Activated CD4-positive, alpha-beta T cell treated with anti-CD3 and anti-CD28 coated beads for 36 hours (primary cell): ENCODE measurements at regions of chr19 and their contacts with region 1.

Region 1: DNA sequence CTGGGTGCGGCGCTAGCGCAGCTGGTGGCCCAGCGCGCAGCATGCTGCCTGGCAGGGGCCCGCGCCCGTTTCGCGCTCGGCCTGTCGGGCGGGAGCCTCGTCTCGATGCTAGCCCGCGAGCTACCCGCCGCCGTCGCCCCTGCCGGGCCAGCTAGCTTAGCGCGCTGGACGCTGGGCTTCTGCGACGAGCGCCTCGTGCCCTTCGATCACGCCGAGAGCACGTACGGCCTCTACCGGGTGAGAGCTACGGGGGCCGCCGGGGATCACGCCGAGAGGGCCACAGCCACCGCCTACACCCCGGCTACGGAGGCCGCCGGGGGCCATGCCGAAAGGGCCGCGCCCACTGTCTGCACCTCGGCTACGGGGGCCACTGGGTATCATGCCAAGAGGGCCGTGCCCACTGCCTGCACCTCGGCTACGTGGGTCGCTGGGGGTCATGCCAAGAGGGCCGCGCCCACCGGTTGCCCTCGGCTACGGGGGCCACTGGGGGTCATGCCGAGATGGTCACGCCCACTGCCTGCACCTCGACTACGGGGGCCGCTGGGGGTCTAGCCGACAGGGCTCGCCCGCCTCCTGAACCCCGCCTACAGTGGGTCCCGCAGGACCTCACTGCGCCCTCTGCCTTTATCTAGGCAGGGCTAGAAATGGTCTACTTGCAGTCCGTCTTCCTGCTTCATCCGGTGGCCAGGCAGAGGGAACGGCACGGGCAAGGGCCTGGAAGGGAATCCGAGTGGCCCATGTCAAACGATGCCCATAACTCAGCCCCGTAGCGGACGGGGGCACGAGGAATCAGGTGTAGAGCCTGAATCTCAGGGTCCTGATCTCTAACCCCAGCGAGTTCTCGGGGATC is 500 bp downstream of the PGLS start:
- DNase-seq: peak; percentile 92
- ATAC-seq: peak; percentile 52
- H3K4me3 Mint-ChIP-seq: peak overlapping the region; percentile 95
- H3K27ac Mint-ChIP-seq: peak overlapping the region; percentile 88
- H3K4me1 Mint-ChIP-seq: peaks cover 39% of the 10 kb centered on the region
- H3K27me3 Mint-ChIP-seq: no peaks in the 10 kb centered on the region

Region 2: GRCh38 chr19:16435238-16435917 is 1076.6 kb before region 1 on chr19:
- CTCF ChIA-PET with region 1: no interaction called
- POLR2A ChIA-PET with region 1: no interaction called
- intact Hi-C with region 1: no loop called
- DNase-seq: no peak
- ATAC-seq: no peak
- H3K4me3 Mint-ChIP-seq: no peak overlapping the region
- H3K27ac Mint-ChIP-seq: peak overlapping the region; percentile 60
- H3K4me1 Mint-ChIP-seq: peaks cover 3% of the 10 kb centered on the region
- H3K27me3 Mint-ChIP-seq: no peaks in the 10 kb centered on the region

Region 3: DNA sequence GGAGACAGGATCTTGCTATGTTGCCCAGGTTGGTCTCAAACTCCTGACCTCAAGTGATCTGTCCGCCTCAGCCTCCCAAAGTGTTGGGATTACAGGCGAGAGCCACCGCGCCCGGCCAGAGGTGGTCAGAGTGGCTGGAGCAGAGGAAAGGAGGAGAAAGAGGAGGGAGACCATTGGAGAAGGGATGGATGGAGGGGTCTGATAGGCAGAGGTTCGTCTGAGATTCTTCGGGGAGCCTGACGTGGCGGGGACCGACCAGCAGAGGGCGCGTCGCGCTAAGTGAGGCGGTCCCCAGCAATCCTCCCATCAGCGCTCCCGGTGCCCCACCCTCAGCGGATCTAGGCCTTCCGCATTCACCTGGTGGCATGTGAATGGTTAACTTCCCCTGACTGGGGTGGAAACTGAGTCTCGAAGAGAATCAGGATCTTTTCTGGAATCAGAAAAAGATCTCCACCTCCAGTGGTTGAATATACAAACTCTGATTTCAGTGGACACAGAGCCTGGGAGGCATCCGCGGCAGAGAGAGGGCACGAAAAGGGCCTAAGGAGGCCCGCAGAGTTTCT is 165.8 kb before region 1 on chr19:
- CTCF ChIA-PET with region 1: no interaction called
- POLR2A ChIA-PET with region 1: interaction called, 15 read pairs
- intact Hi-C with region 1: no loop called
- DNase-seq: peak; percentile 90
- ATAC-seq: peak; percentile 99
- H3K4me3 Mint-ChIP-seq: no peak overlapping the region
- H3K27ac Mint-ChIP-seq: no peak overlapping the region
- H3K4me1 Mint-ChIP-seq: peaks cover 4% of the 10 kb centered on the region
- H3K27me3 Mint-ChIP-seq: peaks cover 12% of the 10 kb centered on the region

Region 4: GRCh38 chr19:17448131-17448967 is 63.6 kb before region 1 on chr19 and contains the start of gene TMEM221:
- CTCF ChIA-PET with region 1: no interaction called
- POLR2A ChIA-PET with region 1: interaction called, 3 read pairs
- intact Hi-C with region 1: loop called in 1 of 2 experiments (anchors 2 kb)
- DNase-seq: peak; percentile 77
- ATAC-seq: peak; percentile 57
- H3K4me3 Mint-ChIP-seq: no peak within 1 kb of the TSS
- H3K27ac Mint-ChIP-seq: no peak within 1 kb of the TSS
- H3K4me1 Mint-ChIP-seq: peaks cover 16% of the 10 kb centered on the region
- H3K27me3 Mint-ChIP-seq: peaks cover 14% of the 10 kb centered on the region
- total RNA-seq, gene TMEM221: not detected

Region 5: GRCh38 chr19:17555480-17555928 is 43.6 kb after region 1 on chr19 and contains the start of gene COLGALT1:
- CTCF ChIA-PET with region 1: interaction called, 3 read pairs
- POLR2A ChIA-PET with region 1: no interaction called
- intact Hi-C with region 1: loop called (anchors 1 to 5 kb)
- DNase-seq: peak; percentile 100
- ATAC-seq: peak; percentile 96
- H3K4me3 Mint-ChIP-seq: peak within 1 kb of the TSS; percentile 82
- H3K27ac Mint-ChIP-seq: peak within 1 kb of the TSS; percentile 67
- H3K4me1 Mint-ChIP-seq: peaks cover 21% of the 10 kb centered on the region
- H3K27me3 Mint-ChIP-seq: no peaks in the 10 kb centered on the region
- total RNA-seq, gene COLGALT1: 51.2 to 64.3 TPM

Region 6: GRCh38 chr19:17747205-17748098 is 235.5 kb after region 1 on chr19:
- CTCF ChIA-PET with region 1: no interaction called
- POLR2A ChIA-PET with region 1: no interaction called
- intact Hi-C with region 1: loop called in 1 of 2 experiments (anchors 2 kb)
- DNase-seq: peak; percentile 98
- ATAC-seq: peak; percentile 90
- H3K4me3 Mint-ChIP-seq: peak overlapping the region; percentile 76
- H3K27ac Mint-ChIP-seq: peak overlapping the region; percentile 60
- H3K4me1 Mint-ChIP-seq: peaks cover 42% of the 10 kb centered on the region
- H3K27me3 Mint-ChIP-seq: no peaks in the 10 kb centered on the region